HepG2 (cell line): ENCODE measurements at regions of chr9 and their contacts with region 1.

Region 1: GRCh38 chr9:70924895-70925547 is 196.4 kb downstream of the TRPM3 start:
- DNase-seq: peak; percentile 56
- ATAC-seq: peak; percentile 91
- H3K4me3 ChIP-seq: no peak overlapping the region
- H3K27ac ChIP-seq: no peak overlapping the region
- H3K4me1 ChIP-seq: no peaks in the 10 kb centered on the region
- H3K27me3 ChIP-seq: no peaks in the 10 kb centered on the region
- CTCF ChIP-seq: peak; percentile 86
- EP300 ChIP-seq: no peak
- POLR2A ChIP-seq: no peak
- RAD21 ChIP-seq: peak; percentile 67

Region 2: DNA sequence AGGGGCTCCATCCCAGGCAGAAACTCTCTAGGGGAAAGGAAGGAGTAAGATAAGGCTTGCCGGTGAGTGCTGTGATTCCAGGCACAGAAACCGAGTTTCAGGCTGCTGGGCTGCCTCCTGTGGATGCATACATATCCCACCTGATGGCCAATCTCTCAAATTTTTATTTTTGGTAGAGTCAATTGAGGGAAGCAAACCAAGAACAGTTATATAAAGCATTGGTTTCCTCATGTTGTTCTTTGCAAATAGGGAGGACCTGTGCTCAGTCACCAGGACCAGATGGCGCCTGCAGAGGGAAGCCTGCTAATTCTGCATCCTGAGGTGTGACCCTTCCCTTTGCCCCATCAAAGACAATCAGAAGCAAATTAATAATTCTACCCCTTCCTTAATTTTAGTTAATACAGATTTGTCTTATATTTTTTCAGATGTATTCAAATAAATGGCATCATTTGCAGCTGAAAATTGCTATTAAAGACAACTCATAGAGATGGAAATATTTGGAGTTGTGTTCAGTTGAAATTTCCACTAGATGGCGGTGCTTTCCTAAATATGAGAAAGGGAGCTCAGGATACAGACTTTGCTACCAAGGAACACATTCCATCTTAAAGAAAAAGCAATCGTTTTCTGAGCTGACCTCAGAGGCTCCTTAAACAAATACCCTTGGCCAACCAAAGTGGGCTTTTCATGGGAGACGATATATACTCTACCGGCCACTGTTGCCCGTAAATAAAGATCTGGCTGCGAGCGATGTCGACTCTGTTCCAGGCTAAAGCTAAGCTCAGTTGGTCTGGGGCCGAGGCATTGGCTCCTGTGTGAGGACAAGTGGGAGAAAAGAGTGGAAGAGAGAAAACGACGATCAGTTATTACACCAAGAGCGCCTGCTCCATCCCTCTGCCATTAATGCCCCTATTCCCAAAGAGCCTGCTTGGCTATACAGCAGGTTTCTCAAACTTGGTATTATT is 284.9 kb before region 1 on chr9:
- CTCF ChIA-PET with region 1: no interaction called
- POLR2A ChIA-PET with region 1: no interaction called
- in situ Hi-C with region 1: no loop called
- intact Hi-C with region 1: loop called (anchors 2 kb)
- DNase-seq: peak; percentile 6
- ATAC-seq: peak; percentile 61; the same call in 2 of the 3 replicates
- H3K4me3 ChIP-seq: no peak overlapping the region
- H3K27ac ChIP-seq: no peak overlapping the region
- H3K4me1 ChIP-seq: no peaks in the 10 kb centered on the region
- H3K27me3 ChIP-seq: no peaks in the 10 kb centered on the region
- CTCF ChIP-seq: peak; percentile 68
- EP300 ChIP-seq: no peak
- POLR2A ChIP-seq: no peak
- RAD21 ChIP-seq: peak; percentile 41; the same call in 1 of the 2 replicates

Region 3: GRCh38 chr9:71001780-71002386 is 76.9 kb after region 1 on chr9:
- CTCF ChIA-PET with region 1: interaction called, 3 read pairs
- POLR2A ChIA-PET with region 1: no interaction called
- in situ Hi-C with region 1: no loop called
- intact Hi-C with region 1: loop called (anchors 10 kb)
- DNase-seq: peak; percentile 10
- ATAC-seq: peak; percentile 64; the same call in 2 of the 3 replicates
- H3K4me3 ChIP-seq: no peak overlapping the region
- H3K27ac ChIP-seq: no peak overlapping the region
- H3K4me1 ChIP-seq: no peaks in the 10 kb centered on the region
- H3K27me3 ChIP-seq: no peaks in the 10 kb centered on the region
- CTCF ChIP-seq: peak; percentile 66
- EP300 ChIP-seq: no peak
- POLR2A ChIP-seq: no peak
- RAD21 ChIP-seq: no peak

Region 4: GRCh38 chr9:71210326-71210725 is 285.3 kb after region 1 on chr9:
- CTCF ChIA-PET with region 1: no interaction called
- POLR2A ChIA-PET with region 1: no interaction called
- in situ Hi-C with region 1: no loop called
- intact Hi-C with region 1: loop called (anchors 1 kb)
- DNase-seq: no peak
- ATAC-seq: no peak
- H3K4me3 ChIP-seq: no peak overlapping the region
- H3K27ac ChIP-seq: no peak overlapping the region
- H3K4me1 ChIP-seq: no peaks in the 10 kb centered on the region
- H3K27me3 ChIP-seq: no peaks in the 10 kb centered on the region
- CTCF ChIP-seq: peak; percentile 36; the same call in 1 of the 2 replicates
- EP300 ChIP-seq: no peak
- POLR2A ChIP-seq: no peak
- RAD21 ChIP-seq: no peak

Region 5: GRCh38 chr9:71223953-71224538 is 299.0 kb after region 1 on chr9:
- CTCF ChIA-PET with region 1: interaction called, 4 read pairs
- POLR2A ChIA-PET with region 1: no interaction called
- in situ Hi-C with region 1: no loop called
- intact Hi-C with region 1: loop called (anchors 1 kb)
- DNase-seq: peak; percentile 7
- ATAC-seq: peak; percentile 53; the same call in 2 of the 3 replicates
- H3K4me3 ChIP-seq: no peak overlapping the region
- H3K27ac ChIP-seq: no peak overlapping the region
- H3K4me1 ChIP-seq: peaks cover 4% of the 10 kb centered on the region
- H3K27me3 ChIP-seq: no peaks in the 10 kb centered on the region
- CTCF ChIP-seq: peak; percentile 58
- EP300 ChIP-seq: no peak
- POLR2A ChIP-seq: no peak
- RAD21 ChIP-seq: no peak

Region 6: GRCh38 chr9:71249729-71250317 is 324.8 kb after region 1 on chr9:
- CTCF ChIA-PET with region 1: interaction called, 40 read pairs
- POLR2A ChIA-PET with region 1: no interaction called
- in situ Hi-C with region 1: loop called (anchors 5 kb)
- intact Hi-C with region 1: loop called (anchors 1 kb)
- DNase-seq: peak; percentile 61
- ATAC-seq: peak; percentile 85
- H3K4me3 ChIP-seq: no peak overlapping the region
- H3K27ac ChIP-seq: no peak overlapping the region
- H3K4me1 ChIP-seq: 0 out of 2 replicates have a peak, but pooled peaks cover 6% of the 10 kb centered on the region
- H3K27me3 ChIP-seq: no peaks in the 10 kb centered on the region; a peak in 1 of 5 replicates
- CTCF ChIP-seq: peak; percentile 84
- EP300 ChIP-seq: no peak
- POLR2A ChIP-seq: no peak
- RAD21 ChIP-seq: peak; percentile 77